Natural killer cell (primary cell): ENCODE measurements at regions of chr5 and their contacts with region 1.

Region 1: DNA sequence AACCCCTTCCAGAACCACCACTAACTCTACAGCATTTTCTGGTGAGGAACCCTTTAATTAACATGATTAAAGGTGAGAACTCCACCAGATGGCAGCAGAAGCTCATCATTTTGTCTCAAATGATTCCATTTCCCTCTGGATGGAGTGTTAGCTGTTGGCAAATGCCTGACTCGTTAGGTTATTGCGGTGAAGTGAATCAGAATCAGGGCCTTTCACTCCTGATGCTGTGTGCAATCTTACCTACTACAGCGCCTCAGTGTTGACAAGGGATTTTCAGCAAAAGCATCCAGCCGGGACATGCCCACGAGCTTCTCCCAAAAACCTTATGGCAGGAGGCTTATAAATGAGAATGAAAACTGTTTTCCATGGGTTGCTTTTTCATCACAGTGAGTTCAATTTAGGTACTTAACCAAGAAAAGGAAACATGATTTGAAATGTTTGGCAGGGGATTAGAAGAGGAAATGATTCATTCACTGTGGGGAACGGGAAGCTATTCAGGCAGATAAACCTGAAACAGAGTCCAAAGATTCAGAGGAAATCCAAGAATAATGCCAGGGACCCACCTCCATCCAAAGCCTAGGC is 48.0 kb upstream of the CAST start:
- DNase-seq: peak in 1 of 2 donors; percentile 77
- ATAC-seq: peak; percentile 21 to 71 (median 61)
- H3K4me3 ChIP-seq: no peak overlapping the region
- H3K4me3 Mint-ChIP-seq: no peak overlapping the region
- H3K27ac ChIP-seq: no peak overlapping the region
- H3K27ac Mint-ChIP-seq: peak overlapping the region in 1 of 2 donors; percentile 57
- H3K4me1 ChIP-seq: peaks cover 6% of the 10 kb centered on the region
- H3K4me1 Mint-ChIP-seq: peaks cover 6 to 7% of the 10 kb centered on the region in 2 donors
- H3K27me3 ChIP-seq: no peaks in the 10 kb centered on the region
- H3K27me3 Mint-ChIP-seq: peaks cover 12 to 43% of the 10 kb centered on the region in 2 donors
- CTCF ChIP-seq: peak; percentile 65

Region 2: DNA sequence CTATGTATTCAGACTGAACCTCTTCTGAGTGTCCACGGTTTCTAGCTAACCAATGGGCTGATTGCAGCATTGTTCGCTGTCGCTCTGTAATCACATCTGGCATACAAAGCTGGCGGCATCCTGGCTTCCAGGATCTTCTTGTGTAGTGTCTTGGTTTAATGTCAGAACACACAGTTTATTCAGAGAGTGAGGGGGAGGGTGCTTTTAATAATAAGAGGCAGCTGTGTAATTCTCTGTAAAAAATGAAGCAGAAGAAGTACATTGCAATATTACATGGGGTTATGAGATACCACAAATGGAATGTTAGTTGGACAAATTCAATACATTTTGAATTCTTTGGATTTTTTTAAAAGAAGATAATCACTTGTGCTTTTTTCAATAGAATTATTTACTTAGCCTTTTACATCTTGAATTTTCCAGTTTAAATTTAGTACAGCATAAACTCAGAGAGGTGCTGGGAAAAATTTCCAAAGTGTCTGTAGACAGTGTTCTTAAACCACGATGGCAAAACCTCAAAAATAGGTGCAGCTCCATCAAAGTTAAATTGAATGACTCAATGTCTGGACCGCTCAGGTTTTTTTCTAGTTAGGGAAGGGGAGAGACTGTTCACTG is 387.2 kb before region 1 on chr5:
- intact Hi-C with region 1: no loop called
- DNase-seq: no peak
- ATAC-seq: no peak
- H3K4me3 ChIP-seq: no peak overlapping the region
- H3K4me3 Mint-ChIP-seq: no peak overlapping the region
- H3K27ac ChIP-seq: no peak overlapping the region
- H3K27ac Mint-ChIP-seq: no peak overlapping the region
- H3K4me1 ChIP-seq: no peaks in the 10 kb centered on the region
- H3K4me1 Mint-ChIP-seq: no peaks in the 10 kb centered on the region
- H3K27me3 ChIP-seq: no peaks in the 10 kb centered on the region
- H3K27me3 Mint-ChIP-seq: peaks cover 9 to 16% of the 10 kb centered on the region in 2 donors
- CTCF ChIP-seq: no peak

Region 3: GRCh38 chr5:96601811-96602244 is 12.4 kb before region 1 on chr5:
- intact Hi-C with region 1: no loop called
- DNase-seq: peak in 1 of 2 donors; percentile 82
- ATAC-seq: peak; percentile 81 to 93 (median 90)
- H3K4me3 ChIP-seq: no peak overlapping the region
- H3K4me3 Mint-ChIP-seq: no peak overlapping the region
- H3K27ac ChIP-seq: no peak overlapping the region
- H3K27ac Mint-ChIP-seq: no peak overlapping the region
- H3K4me1 ChIP-seq: peaks cover 3% of the 10 kb centered on the region
- H3K4me1 Mint-ChIP-seq: no peaks in the 10 kb centered on the region
- H3K27me3 ChIP-seq: peaks cover 4% of the 10 kb centered on the region
- H3K27me3 Mint-ChIP-seq: peaks cover 4 to 15% of the 10 kb centered on the region in 2 donors
- CTCF ChIP-seq: peak; percentile 85

Region 4: GRCh38 chr5:96687812-96688453 is 73.7 kb after region 1 on chr5:
- intact Hi-C with region 1: loop called (anchors 1 kb)
- DNase-seq: peak in 1 of 2 donors; percentile 62
- ATAC-seq: peak; percentile 79 to 92 (median 92)
- H3K4me3 ChIP-seq: no peak overlapping the region
- H3K4me3 Mint-ChIP-seq: peak overlapping the region; percentile 51
- H3K27ac ChIP-seq: no peak overlapping the region
- H3K27ac Mint-ChIP-seq: peak overlapping the region; percentile 41 to 66
- H3K4me1 ChIP-seq: no peaks in the 10 kb centered on the region
- H3K4me1 Mint-ChIP-seq: peaks cover 47 to 53% of the 10 kb centered on the region in 2 donors
- H3K27me3 ChIP-seq: no peaks in the 10 kb centered on the region
- H3K27me3 Mint-ChIP-seq: no peaks in the 10 kb centered on the region
- CTCF ChIP-seq: peak; percentile 70

Region 5: GRCh38 chr5:96729156-96729555 is 115.0 kb after region 1 on chr5:
- intact Hi-C with region 1: loop called (anchors 2 kb)
- DNase-seq: peak in 1 of 2 donors; percentile 31
- ATAC-seq: no peak
- H3K4me3 ChIP-seq: no peak overlapping the region
- H3K4me3 Mint-ChIP-seq: no peak overlapping the region
- H3K27ac ChIP-seq: no peak overlapping the region
- H3K27ac Mint-ChIP-seq: peak overlapping the region; percentile 63 to 67
- H3K4me1 ChIP-seq: no peaks in the 10 kb centered on the region
- H3K4me1 Mint-ChIP-seq: peaks cover 9 to 21% of the 10 kb centered on the region in 2 donors
- H3K27me3 ChIP-seq: no peaks in the 10 kb centered on the region
- H3K27me3 Mint-ChIP-seq: no peaks in the 10 kb centered on the region
- CTCF ChIP-seq: peak; percentile 32